ENCODE measurements at regions of chr20 and their contacts with region 1.

Region 1: DNA sequence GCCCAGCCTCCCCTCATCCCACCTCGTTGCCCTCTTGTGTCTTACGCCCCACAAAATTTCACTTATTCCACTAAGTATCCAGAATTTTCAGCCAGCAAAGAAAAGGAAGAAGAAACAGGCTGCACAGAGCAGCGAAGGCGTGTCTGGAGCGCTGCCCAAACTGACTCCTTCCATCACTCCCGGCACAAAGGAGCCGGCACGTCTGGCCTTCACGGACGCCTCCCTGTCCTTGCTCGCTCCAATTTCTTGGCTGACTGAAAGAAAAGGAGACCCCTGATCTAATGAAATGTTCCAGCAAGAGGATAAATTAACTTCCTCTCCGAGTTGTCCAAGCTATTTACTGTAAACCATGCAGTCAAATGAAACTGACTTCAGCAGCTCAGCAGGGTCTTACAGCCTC is 152.3 kb upstream of the CDH4 start:
- DNase-seq: no peak
- ATAC-seq: no peak
- H3K4me3 Mint-ChIP-seq: no peak overlapping the region
- H3K27ac Mint-ChIP-seq: no peak overlapping the region
- H3K4me1 Mint-ChIP-seq: no peaks in the 10 kb centered on the region
- H3K27me3 Mint-ChIP-seq: peaks cover 2% of the 10 kb centered on the region

Region 2: GRCh38 chr20:60395991-60396390 is 703.8 kb before region 1 on chr20:
- CTCF ChIA-PET with region 1: no interaction called
- POLR2A ChIA-PET with region 1: no interaction called
- intact Hi-C with region 1: loop called in 1 of 2 experiments (anchors 2 kb)
- DNase-seq: no peak
- ATAC-seq: no peak
- H3K4me3 Mint-ChIP-seq: no peak overlapping the region
- H3K27ac Mint-ChIP-seq: no peak overlapping the region
- H3K4me1 Mint-ChIP-seq: no peaks in the 10 kb centered on the region
- H3K27me3 Mint-ChIP-seq: no peaks in the 10 kb centered on the region

Measured in activated CD4-positive, alpha-beta T cell treated with anti-CD3 and anti-CD28 coated beads for 36 hours (primary cell).